HCT116 (cell line): ENCODE measurements at regions of chr19 and their contacts with region 1.

Region 1: DNA sequence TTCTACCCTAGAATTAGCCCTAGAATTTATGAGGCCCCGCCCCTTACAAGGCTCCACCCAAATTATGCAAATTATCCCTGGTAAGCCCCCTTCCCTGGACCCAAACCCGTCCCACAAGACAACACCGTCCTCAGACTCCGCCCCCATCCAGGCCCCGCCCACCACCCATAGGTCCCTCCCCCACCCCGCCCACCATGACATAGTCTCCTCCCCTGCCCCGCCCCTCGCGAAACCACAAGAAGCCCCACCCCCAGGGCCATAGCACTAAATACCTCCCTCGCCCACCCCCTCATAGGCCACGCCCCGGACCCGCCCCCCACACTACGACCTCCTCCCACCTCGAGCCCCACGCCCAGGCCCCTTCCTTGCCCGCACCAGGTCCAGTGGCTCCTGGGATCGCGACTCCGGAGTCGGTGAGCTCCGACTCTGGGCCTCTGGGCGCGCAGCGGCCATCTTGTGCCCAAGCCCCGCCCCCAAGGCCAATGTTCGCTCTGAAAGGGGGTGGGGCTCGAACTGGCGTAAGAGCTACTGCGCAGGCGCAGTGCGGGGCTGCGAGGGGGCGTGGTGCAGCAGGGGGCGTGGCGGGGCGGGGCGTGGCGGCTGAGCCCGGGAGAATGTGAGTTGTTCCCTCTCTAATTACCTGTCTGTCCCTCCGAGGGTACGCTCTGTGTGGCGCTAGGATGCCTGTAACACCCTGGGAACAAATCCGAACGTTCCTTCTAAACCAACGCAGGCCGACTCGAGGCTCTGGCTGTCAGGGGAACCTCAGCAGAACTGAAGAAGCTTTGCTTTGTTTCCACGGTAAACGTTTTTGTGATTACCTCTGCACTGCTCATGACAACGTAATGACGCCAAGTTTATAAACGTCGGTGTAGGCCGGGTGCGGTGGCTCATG is at the start of gene ZNF784:
- DNase-seq: peak; percentile 85
- ATAC-seq: peak; percentile 82
- H3K4me3 ChIP-seq: peak within 1 kb of the TSS; percentile 54 to 69
- H3K27ac ChIP-seq: peak within 1 kb of the TSS; percentile 81
- H3K4me1 ChIP-seq: peaks cover 8 to 14% of the 10 kb centered on the region in 2 experiments; a peak in 3 of 4 replicates
- H3K27me3 ChIP-seq: no peaks in the 10 kb centered on the region
- CTCF ChIP-seq: no peak
- POLR2A ChIP-seq: no peak
- RAD21 ChIP-seq: no peak
- total RNA-seq, gene ZNF784: 5.3 TPM

Region 2: DNA sequence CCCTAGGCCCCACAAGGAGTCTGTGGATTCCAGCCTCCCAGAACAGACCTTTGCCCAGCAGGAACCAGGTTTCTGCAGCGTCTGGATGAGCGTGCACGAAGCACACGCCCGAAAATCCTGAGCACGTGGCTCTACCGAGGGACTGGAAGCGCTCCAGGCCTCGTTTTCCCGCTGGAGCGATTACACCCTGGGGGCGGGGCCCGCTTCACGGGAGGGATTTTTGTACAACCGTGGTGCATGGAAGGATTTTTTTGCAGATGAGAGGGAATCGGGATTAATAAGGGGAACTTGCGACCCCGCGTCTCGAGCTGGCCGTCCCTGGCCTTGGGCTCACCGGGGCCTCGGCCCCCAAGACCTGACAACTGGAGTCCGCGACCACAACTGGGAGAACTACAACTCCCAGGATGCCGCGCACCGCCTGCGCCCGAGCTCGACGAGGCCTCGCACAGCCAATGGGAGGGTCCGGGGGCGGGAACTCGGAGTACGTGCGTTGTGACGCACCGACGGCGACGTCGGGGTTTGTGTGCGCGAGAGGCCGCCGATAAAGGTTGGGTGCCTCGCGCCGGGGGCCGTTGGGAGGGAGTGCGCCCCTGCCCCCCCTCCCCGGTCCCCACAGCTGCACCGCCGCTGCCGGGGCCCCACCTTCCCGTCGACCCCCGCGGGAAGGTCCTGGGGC is 148.1 kb before region 1 on chr19 and contains the start of gene ZNF628:
- CTCF ChIA-PET with region 1: interaction called, 4 read pairs
- POLR2A ChIA-PET with region 1: interaction called, 10 read pairs
- RAD21 ChIA-PET with region 1: no interaction called
- intact Hi-C with region 1: no loop called
- DNase-seq: peak; percentile 96
- ATAC-seq: peak; percentile 78
- H3K4me3 ChIP-seq: peak within 1 kb of the TSS; percentile 63 to 73
- H3K27ac ChIP-seq: peak within 1 kb of the TSS; percentile 98
- H3K4me1 ChIP-seq: peaks cover 35 to 53% of the 10 kb centered on the region in 2 experiments
- H3K27me3 ChIP-seq: no peaks in the 10 kb centered on the region
- CTCF ChIP-seq: no peak
- POLR2A ChIP-seq: no peak
- RAD21 ChIP-seq: no peak
- total RNA-seq, gene ZNF628: 14.9 TPM

Region 3: DNA sequence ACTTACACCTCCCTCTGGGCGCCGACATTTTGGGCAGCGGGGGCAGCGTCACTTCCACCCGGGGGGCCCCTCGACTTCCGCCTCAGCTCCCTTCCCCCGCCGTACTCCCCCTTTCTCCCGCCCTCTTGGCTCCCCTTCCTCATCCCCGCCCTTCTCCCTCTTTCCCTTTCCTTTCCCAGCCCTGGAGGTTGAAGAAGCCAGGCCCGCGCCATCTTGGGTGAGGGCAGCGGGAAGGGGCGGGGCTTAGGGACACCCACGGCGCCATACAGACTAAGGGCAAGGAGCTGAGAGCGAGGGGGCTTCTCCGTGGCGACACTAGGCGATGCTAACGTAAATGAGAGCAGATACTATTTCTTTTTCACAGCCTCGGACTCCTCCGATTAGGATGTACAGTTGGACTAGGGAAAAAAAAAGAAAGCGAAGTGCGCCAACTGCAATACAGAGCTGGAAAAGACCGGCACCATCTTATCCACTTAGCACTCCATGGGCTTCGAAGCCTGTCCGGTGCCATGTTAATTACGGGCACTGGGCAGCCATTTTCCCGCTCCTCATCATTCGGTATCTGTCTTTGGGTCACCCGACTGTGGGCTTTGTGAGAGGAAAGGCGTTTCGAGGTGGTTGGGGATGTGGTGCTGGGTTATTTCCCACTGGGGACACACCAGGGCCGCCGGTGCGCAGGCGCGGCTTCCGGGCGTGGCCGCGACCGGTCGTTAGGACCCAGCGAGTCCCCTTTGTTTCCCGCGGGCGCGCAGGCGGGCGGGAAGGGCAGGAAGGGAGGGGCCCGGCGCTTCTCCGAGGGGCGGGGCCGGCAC is 24.7 kb before region 1 on chr19 and contains the start of gene FIZ1:
- CTCF ChIA-PET with region 1: interaction called, 3 read pairs
- POLR2A ChIA-PET with region 1: interaction called, 10 read pairs
- RAD21 ChIA-PET with region 1: interaction called in 1 of 2 experiments, 3 read pairs
- intact Hi-C with region 1: loop called (anchors 1 kb)
- DNase-seq: peak; percentile 97
- ATAC-seq: peak; percentile 78
- H3K4me3 ChIP-seq: peak within 1 kb of the TSS; percentile 56 to 67
- H3K27ac ChIP-seq: peak within 1 kb of the TSS; percentile 83
- H3K4me1 ChIP-seq: peaks cover 26 to 41% of the 10 kb centered on the region in 2 experiments
- H3K27me3 ChIP-seq: no peaks in the 10 kb centered on the region
- CTCF ChIP-seq: no peak
- POLR2A ChIP-seq: peak; percentile 50
- RAD21 ChIP-seq: no peak
- total RNA-seq, gene FIZ1: 15.3 TPM

Region 4: DNA sequence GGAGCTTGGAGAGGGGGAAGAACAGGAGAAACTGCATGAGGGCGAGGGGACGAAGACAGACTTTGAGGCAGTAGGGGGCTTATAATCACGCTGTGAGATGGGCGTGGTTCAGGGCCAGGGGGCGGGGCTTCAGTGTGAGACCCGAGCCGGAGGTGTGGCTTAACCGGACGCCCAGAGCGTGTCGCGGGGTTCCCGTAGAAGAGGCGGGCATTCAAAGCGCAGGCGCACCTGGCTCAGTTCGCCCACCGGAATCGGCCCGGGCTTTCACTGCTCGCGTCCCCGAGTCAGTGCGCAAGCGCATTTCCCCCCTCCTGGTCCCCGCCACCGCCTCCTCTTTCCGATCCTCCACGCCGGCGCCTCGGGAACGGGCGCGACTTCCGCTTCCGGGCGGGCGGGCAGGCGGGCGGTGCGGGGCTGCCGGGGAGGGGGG is 19.1 kb before region 1 on chr19:
- CTCF ChIA-PET with region 1: interaction called, 12 read pairs
- POLR2A ChIA-PET with region 1: interaction called, 10 read pairs
- RAD21 ChIA-PET with region 1: no interaction called
- intact Hi-C with region 1: no loop called
- DNase-seq: peak; percentile 92
- ATAC-seq: peak; percentile 81
- H3K4me3 ChIP-seq: peak overlapping the region; percentile 89 to 93
- H3K27ac ChIP-seq: peak overlapping the region; percentile 98
- H3K4me1 ChIP-seq: peaks cover 26 to 46% of the 10 kb centered on the region in 2 experiments
- H3K27me3 ChIP-seq: no peaks in the 10 kb centered on the region
- CTCF ChIP-seq: no peak
- POLR2A ChIP-seq: no peak
- RAD21 ChIP-seq: no peak